A673 (cell line): ENCODE measurements at regions of chr6 and their contacts with region 1.

Region 1: DNA sequence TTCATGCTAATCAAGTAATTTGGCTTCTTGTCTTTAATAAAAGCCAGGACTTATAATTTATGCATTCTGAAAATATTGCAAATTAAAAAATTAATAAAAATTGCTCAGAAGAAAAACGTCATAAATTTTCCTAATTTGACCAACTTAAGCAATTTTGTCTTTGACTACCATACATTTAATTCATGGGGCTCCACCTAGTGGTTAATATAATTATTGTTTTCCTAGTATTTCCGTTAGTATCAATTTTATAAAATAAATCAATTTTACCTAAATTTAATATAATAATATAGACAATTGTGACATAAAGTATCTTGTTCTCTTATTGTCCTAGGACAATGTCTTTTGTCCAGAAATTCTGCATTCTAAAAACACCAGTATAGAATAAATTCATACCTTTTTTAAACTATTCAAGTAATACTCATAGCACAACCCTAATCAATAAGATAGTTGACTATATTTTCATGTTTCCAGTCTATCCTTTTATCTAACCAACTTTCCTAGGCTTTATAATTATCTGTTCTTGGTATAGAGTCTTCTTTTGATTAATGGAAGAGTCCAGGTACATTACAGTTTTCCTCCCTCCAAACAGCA is 319.9 kb downstream of the TRDN start:
- DNase-seq: peak; percentile 62
- H3K4me3 ChIP-seq: no peak overlapping the region
- H3K27ac ChIP-seq: peak overlapping the region; percentile 23
- H3K4me1 ChIP-seq: peaks cover 7% of the 10 kb centered on the region
- H3K27me3 ChIP-seq: no peaks in the 10 kb centered on the region
- CTCF ChIP-seq: peak; percentile 72

Region 2: DNA sequence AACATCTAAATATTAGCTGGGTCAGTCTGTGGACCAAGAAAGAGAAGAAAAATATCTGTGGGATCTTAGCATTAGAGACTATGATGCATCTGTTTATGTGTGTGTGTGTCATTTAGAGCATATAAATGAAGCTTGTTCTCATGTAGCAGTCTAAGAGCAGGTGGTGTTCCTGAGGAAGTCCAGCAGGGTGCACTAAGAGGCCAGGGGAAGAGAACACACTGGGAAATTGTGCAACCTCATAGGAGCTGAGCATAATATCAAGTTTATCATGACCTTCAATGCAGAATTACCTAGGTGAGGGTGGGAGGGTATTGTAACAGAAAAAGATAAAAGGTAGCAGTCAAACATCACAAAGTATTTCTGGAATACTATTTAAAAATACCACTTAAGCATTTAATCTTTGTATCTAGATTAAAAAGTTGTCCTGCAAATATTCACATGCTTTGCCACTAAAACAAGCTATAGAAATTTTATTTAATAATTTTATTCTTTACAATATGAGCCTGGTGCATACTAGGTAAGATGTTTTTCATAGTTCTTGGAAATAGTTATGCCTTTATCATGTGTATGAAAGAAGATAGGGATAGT is 447.3 kb before region 1 on chr6:
- CTCF ChIA-PET with region 1: no interaction called
- POLR2A ChIA-PET with region 1: no interaction called
- intact Hi-C with region 1: loop called (anchors 2 kb)
- DNase-seq: peak; percentile 91
- H3K4me3 ChIP-seq: no peak overlapping the region
- H3K27ac ChIP-seq: peak overlapping the region; percentile 59
- H3K4me1 ChIP-seq: peaks cover 54% of the 10 kb centered on the region
- H3K27me3 ChIP-seq: no peaks in the 10 kb centered on the region
- CTCF ChIP-seq: peak; percentile 87

Region 3: DNA sequence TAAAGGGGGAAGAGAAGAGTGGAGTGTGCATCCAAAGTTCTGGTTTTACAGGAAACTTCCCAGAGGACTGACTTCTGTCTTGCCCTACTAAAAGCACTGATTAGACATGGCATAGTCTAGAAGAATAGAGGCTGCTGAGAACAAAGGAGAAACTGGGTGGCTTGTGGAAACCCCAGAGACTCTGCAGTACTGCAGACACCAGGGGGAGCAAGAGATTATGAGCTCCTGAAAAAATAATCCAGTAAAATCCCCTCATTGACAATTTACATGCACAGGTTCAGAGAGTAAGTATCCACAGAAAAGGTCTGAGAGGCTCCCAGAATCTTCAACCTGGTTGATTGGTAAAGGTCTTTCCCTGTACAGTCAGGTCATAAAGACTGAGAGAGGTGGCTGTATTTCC is 369.5 kb before region 1 on chr6:
- CTCF ChIA-PET with region 1: no interaction called
- POLR2A ChIA-PET with region 1: no interaction called
- intact Hi-C with region 1: loop called (anchors 5 kb)
- DNase-seq: peak; percentile 78
- H3K4me3 ChIP-seq: no peak overlapping the region
- H3K27ac ChIP-seq: no peak overlapping the region
- H3K4me1 ChIP-seq: no peaks in the 10 kb centered on the region
- H3K27me3 ChIP-seq: no peaks in the 10 kb centered on the region
- CTCF ChIP-seq: peak; percentile 73